CD14-positive monocyte (primary cell): ENCODE measurements at regions of chr1 and their contacts with region 1.

Region 1: GRCh38 chr1:107963601-107964335 is 1.2 kb downstream of the VAV3 start:
- DNase-seq: peak; percentile 54 to 72 (median 70)
- H3K4me3 ChIP-seq: peak overlapping the region; percentile 94 to 99 (median 94)
- H3K4me3 Mint-ChIP-seq: peak overlapping the region; percentile 99
- H3K27ac ChIP-seq: peak overlapping the region; percentile 89 to 94
- H3K27ac Mint-ChIP-seq: peak overlapping the region; percentile 95 to 99 (median 97)
- H3K4me1 ChIP-seq: peaks cover 19 to 34% of the 10 kb centered on the region in 2 donors
- H3K4me1 Mint-ChIP-seq: peaks cover 43% of the 10 kb centered on the region
- H3K27me3 ChIP-seq: no peaks in the 10 kb centered on the region
- H3K27me3 Mint-ChIP-seq: peaks cover 0 to 4% (median 0%) of the 10 kb centered on the region in 3 donors
- CTCF ChIP-seq: no peak

Region 2: DNA sequence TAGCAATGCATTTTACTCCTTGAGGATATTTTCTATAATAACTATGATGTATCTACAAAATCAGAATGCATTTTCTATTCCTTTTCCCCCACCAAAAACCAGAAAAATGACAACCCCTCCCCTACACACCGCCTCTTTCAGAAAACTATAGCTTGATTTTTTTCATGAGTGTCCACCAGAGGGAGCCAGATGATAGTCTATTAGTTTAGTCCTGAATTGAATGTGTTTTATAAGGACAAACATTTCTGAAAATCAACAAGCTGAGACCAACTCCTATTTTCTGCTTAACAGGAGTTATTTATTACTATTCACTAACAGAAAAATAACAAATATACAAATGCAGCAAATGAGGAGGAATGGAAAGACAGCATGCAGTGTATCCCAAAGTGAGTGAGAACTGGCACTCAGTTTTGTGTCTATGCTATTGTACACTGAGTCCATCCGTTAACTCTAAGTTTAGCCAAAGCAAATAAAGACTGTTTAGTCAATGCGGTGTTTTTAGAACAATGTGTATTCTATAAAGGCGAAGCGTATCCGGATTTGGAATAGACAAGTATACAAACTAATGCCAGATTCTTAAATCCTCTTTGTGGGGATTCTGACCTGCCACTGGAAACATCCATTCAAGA is 181.4 kb before region 1 on chr1:
- intact Hi-C with region 1: loop called (anchors 2 to 10 kb)
- DNase-seq: peak; percentile 42 to 67 (median 53)
- H3K4me3 ChIP-seq: no peak overlapping the region
- H3K4me3 Mint-ChIP-seq: no peak overlapping the region
- H3K27ac ChIP-seq: no peak overlapping the region
- H3K27ac Mint-ChIP-seq: no peak overlapping the region
- H3K4me1 ChIP-seq: peaks cover 22 to 23% of the 10 kb centered on the region in 2 donors
- H3K4me1 Mint-ChIP-seq: peaks cover 27% of the 10 kb centered on the region
- H3K27me3 ChIP-seq: no peaks in the 10 kb centered on the region
- H3K27me3 Mint-ChIP-seq: peaks cover 0 to 1% (median 0%) of the 10 kb centered on the region in 3 donors
- CTCF ChIP-seq: peak; percentile 85

Region 3: DNA sequence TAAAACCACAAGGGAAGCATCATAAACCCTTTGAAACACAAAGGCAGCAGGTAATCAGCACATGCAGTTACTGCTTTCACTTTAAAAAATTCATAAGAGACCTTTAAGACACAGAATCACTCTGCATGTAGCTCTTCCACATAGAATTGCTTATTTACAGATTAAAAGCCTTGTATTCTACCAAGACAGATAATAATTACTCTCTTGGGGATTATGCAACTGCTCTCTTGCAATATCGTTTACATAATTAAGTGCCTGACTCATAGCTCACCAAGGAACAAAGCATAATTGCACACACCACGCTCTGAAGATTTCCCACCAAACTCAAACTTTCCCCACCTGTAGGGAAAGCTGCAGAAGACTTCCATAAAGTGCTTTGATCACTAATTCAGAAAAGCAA is 86.7 kb before region 1 on chr1:
- intact Hi-C with region 1: loop called in 1 of 2 experiments (anchors 5 kb)
- DNase-seq: peak; percentile 72 to 90 (median 88)
- H3K4me3 ChIP-seq: peak overlapping the region in 1 of 3 experiments; percentile 49
- H3K4me3 Mint-ChIP-seq: peak overlapping the region; percentile 25 to 64
- H3K27ac ChIP-seq: peak overlapping the region in 1 of 2 donors; percentile 75
- H3K27ac Mint-ChIP-seq: peak overlapping the region; percentile 82 to 95 (median 89)
- H3K4me1 ChIP-seq: peaks cover 57 to 74% of the 10 kb centered on the region in 2 donors
- H3K4me1 Mint-ChIP-seq: peaks cover 65% of the 10 kb centered on the region
- H3K27me3 ChIP-seq: no peaks in the 10 kb centered on the region
- H3K27me3 Mint-ChIP-seq: no peaks in the 10 kb centered on the region
- CTCF ChIP-seq: no peak

Region 4: GRCh38 chr1:107897438-107898345 is 66.1 kb before region 1 on chr1:
- intact Hi-C with region 1: loop called in 1 of 2 experiments (anchors 10 kb)
- DNase-seq: peak in 2 of 3 donors; percentile 36 to 37
- H3K4me3 ChIP-seq: peak overlapping the region; percentile 31 to 70 (median 50)
- H3K4me3 Mint-ChIP-seq: peak overlapping the region; percentile 69 to 92
- H3K27ac ChIP-seq: peak overlapping the region in 1 of 2 donors; percentile 73
- H3K27ac Mint-ChIP-seq: peak overlapping the region in 5 of 7 donors; percentile 62 to 87 (median 78)
- H3K4me1 ChIP-seq: peaks cover 22 to 28% of the 10 kb centered on the region in 2 donors
- H3K4me1 Mint-ChIP-seq: peaks cover 50% of the 10 kb centered on the region
- H3K27me3 ChIP-seq: no peaks in the 10 kb centered on the region
- H3K27me3 Mint-ChIP-seq: peaks cover 0 to 2% (median 0%) of the 10 kb centered on the region in 3 donors
- CTCF ChIP-seq: no peak

Region 5: GRCh38 chr1:107936498-107937481 is 27.0 kb before region 1 on chr1:
- intact Hi-C with region 1: loop called in 1 of 2 experiments (anchors 2 kb)
- DNase-seq: peak; percentile 86 to 95 (median 94)
- H3K4me3 ChIP-seq: peak overlapping the region in 2 of 3 experiments; percentile 27 to 56
- H3K4me3 Mint-ChIP-seq: peak overlapping the region; percentile 53 to 80
- H3K27ac ChIP-seq: peak overlapping the region; percentile 78 to 95
- H3K27ac Mint-ChIP-seq: peak overlapping the region; percentile 95 to 99 (median 98)
- H3K4me1 ChIP-seq: peaks cover 69 to 75% of the 10 kb centered on the region in 2 donors
- H3K4me1 Mint-ChIP-seq: peaks cover 71% of the 10 kb centered on the region
- H3K27me3 ChIP-seq: no peaks in the 10 kb centered on the region
- H3K27me3 Mint-ChIP-seq: no peaks in the 10 kb centered on the region
- CTCF ChIP-seq: no peak

Region 6: GRCh38 chr1:108057541-108057940 is 93.8 kb after region 1 on chr1:
- intact Hi-C with region 1: loop called in 1 of 2 experiments (anchors 10 kb)
- DNase-seq: peak; percentile 55 to 77 (median 76)
- H3K4me3 ChIP-seq: peak overlapping the region in 1 of 3 experiments; percentile 40
- H3K4me3 Mint-ChIP-seq: peak overlapping the region; percentile 51 to 76
- H3K27ac ChIP-seq: peak overlapping the region; percentile 39 to 69
- H3K27ac Mint-ChIP-seq: peak overlapping the region; percentile 86 to 97 (median 89)
- H3K4me1 ChIP-seq: peaks cover 64 to 71% of the 10 kb centered on the region in 2 donors
- H3K4me1 Mint-ChIP-seq: peaks cover 66% of the 10 kb centered on the region
- H3K27me3 ChIP-seq: no peaks in the 10 kb centered on the region
- H3K27me3 Mint-ChIP-seq: no peaks in the 10 kb centered on the region
- CTCF ChIP-seq: no peak

Region 7: GRCh38 chr1:108125312-108126138 is 161.8 kb after region 1 on chr1:
- intact Hi-C with region 1: loop called (anchors 10 kb)
- DNase-seq: peak; percentile 63 to 75 (median 65)
- H3K4me3 ChIP-seq: no peak overlapping the region
- H3K4me3 Mint-ChIP-seq: no peak overlapping the region
- H3K27ac ChIP-seq: no peak overlapping the region
- H3K27ac Mint-ChIP-seq: peak overlapping the region in 2 of 7 donors; percentile 15 to 71
- H3K4me1 ChIP-seq: peaks cover 9 to 14% of the 10 kb centered on the region in 2 donors
- H3K4me1 Mint-ChIP-seq: peaks cover 22% of the 10 kb centered on the region
- H3K27me3 ChIP-seq: no peaks in the 10 kb centered on the region
- H3K27me3 Mint-ChIP-seq: peaks cover 0 to 2% (median 0%) of the 10 kb centered on the region in 3 donors
- CTCF ChIP-seq: peak; percentile 89